ENCODE measurements at regions of chr9 and their contacts with region 1.

Region 1: GRCh38 chr9:70549926-70550325 is 135.5 kb upstream of the KLF9 start:
- DNase-seq: no peak
- H3K4me3 ChIP-seq: no peak overlapping the region
- H3K27ac ChIP-seq: no peak overlapping the region
- H3K4me1 ChIP-seq: peaks cover 0 to 27% (median 13%) of the 10 kb centered on the region in 4 donors
- H3K27me3 ChIP-seq: no peaks in the 10 kb centered on the region
- CTCF ChIP-seq: no peak
- EP300 ChIP-seq: no peak
- POLR2A ChIP-seq: no peak

Region 2: GRCh38 chr9:70563431-70564204 is 13.7 kb after region 1 on chr9:
- intact Hi-C with region 1: loop called (anchors 2 kb)
- DNase-seq: no peak
- H3K4me3 ChIP-seq: no peak overlapping the region
- H3K27ac ChIP-seq: peak overlapping the region; percentile 40 to 55 (median 49)
- H3K4me1 ChIP-seq: peaks cover 0 to 4% (median 1%) of the 10 kb centered on the region in 4 donors
- H3K27me3 ChIP-seq: no peaks in the 10 kb centered on the region
- CTCF ChIP-seq: no peak
- EP300 ChIP-seq: peak in 1 of 4 donors; percentile 30
- POLR2A ChIP-seq: no peak